IMR-90 (cell line): ENCODE measurements at regions of chr1 and their contacts with region 1.

Region 1: DNA sequence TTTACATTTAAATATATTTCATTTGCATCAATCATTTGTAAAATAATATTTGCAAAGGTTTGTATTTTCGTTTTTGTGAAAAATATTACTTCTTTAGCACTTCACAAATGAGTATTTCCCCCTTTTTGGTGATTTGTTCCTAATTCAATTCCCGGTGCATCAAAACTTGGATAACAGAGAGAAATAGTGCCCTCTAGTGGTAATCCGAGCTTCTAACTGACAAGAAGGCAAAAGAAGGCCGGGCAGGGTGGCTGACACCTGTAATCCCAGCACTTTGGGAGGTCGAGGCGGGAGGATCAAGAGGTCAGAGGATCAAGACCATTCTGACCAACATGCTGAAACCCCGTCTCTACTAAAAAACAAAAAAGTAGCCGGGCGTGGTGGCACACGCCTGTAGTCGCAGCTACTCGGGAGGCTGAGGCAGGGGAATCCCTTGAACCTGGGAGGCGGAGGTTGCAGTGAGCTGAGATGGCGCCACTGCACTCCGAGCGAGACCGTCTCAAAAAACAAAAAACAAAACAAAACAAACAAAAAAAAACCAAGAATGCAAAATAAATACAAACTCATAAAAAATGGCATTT is 137.7 kb downstream of the COL11A1 start:
- DNase-seq: peak; percentile 75
- ATAC-seq: no peak
- H3K4me3 ChIP-seq: no peak overlapping the region
- H3K27ac ChIP-seq: no peak overlapping the region
- H3K4me1 ChIP-seq: no peaks in the 10 kb centered on the region
- H3K27me3 ChIP-seq: no peaks in the 10 kb centered on the region
- CTCF ChIP-seq: peak; percentile 69
- POLR2A ChIP-seq: no peak
- RAD21 ChIP-seq: peak; percentile 80

Region 2: GRCh38 chr1:101520302-101520701 is 1450.3 kb before region 1 on chr1:
- CTCF ChIA-PET with region 1: no interaction called
- POLR2A ChIA-PET with region 1: no interaction called
- dilution Hi-C with region 1: no loop called
- in situ Hi-C with region 1: no loop called
- intact Hi-C with region 1: loop called (anchors 1 kb)
- DNase-seq: peak; percentile 26
- ATAC-seq: peak; percentile 75
- H3K4me3 ChIP-seq: no peak overlapping the region
- H3K27ac ChIP-seq: no peak overlapping the region
- H3K4me1 ChIP-seq: no peaks in the 10 kb centered on the region
- H3K27me3 ChIP-seq: no peaks in the 10 kb centered on the region
- CTCF ChIP-seq: peak; percentile 68
- POLR2A ChIP-seq: no peak
- RAD21 ChIP-seq: peak; percentile 67

Region 3: GRCh38 chr1:102550729-102551384 is 419.7 kb before region 1 on chr1:
- CTCF ChIA-PET with region 1: interaction called, 3 read pairs
- POLR2A ChIA-PET with region 1: no interaction called
- dilution Hi-C with region 1: no loop called
- in situ Hi-C with region 1: loop called (anchors 25 kb)
- intact Hi-C with region 1: loop called (anchors 5 kb)
- DNase-seq: peak; percentile 9
- ATAC-seq: no peak
- H3K4me3 ChIP-seq: no peak overlapping the region
- H3K27ac ChIP-seq: no peak overlapping the region
- H3K4me1 ChIP-seq: no peaks in the 10 kb centered on the region
- H3K27me3 ChIP-seq: no peaks in the 10 kb centered on the region
- CTCF ChIP-seq: peak; percentile 44
- POLR2A ChIP-seq: no peak
- RAD21 ChIP-seq: peak; percentile 52

Region 4: GRCh38 chr1:103461161-103462105 is 490.8 kb after region 1 on chr1:
- CTCF ChIA-PET with region 1: interaction called, 4 read pairs
- POLR2A ChIA-PET with region 1: no interaction called
- dilution Hi-C with region 1: no loop called
- in situ Hi-C with region 1: no loop called
- intact Hi-C with region 1: loop called (anchors 10 kb)
- DNase-seq: peak; percentile 16
- ATAC-seq: no peak
- H3K4me3 ChIP-seq: no peak overlapping the region
- H3K27ac ChIP-seq: no peak overlapping the region
- H3K4me1 ChIP-seq: no peaks in the 10 kb centered on the region
- H3K27me3 ChIP-seq: no peaks in the 10 kb centered on the region
- CTCF ChIP-seq: peak; percentile 63
- POLR2A ChIP-seq: no peak
- RAD21 ChIP-seq: peak; percentile 59